ENCODE measurements at regions of chr11 and their contacts with region 1.

Region 1: DNA sequence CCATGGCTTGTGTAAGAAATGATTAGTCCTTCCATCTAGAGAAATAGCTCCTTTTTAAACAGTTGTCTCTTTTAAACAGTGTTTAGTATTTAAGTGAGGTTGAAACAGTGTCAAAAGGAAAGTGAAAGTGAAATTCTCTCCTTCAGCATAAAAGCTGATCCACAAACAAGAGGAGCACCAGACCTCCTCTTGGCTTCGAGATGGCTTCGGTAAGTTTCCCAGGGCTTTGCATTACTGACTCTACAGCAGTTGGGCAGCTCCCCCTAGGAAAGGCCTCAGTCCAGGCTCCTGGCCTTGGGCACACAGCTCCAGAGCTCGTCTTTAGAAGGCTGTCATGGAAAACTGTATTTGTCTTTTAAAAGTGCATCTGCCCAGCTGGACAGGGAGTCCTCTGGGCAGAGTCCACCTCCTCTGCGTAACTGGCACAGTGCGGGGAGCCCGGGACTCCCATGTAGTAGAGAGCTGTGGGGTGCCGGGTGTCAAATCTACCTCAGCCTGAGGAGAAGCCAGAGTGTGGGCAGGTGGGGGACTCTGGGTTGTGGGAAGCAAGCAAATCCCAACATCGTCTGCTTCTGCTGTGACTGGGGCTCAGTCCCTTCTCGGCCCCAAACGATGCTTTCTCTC is at the start of gene PLAAT4:
- DNase-seq: peak; percentile 64
- H3K4me3 Mint-ChIP-seq: peak within 1 kb of the TSS; percentile 82
- H3K27ac Mint-ChIP-seq: peak within 1 kb of the TSS; percentile 87
- H3K4me1 Mint-ChIP-seq: peaks cover 75% of the 10 kb centered on the region
- H3K27me3 Mint-ChIP-seq: no peaks in the 10 kb centered on the region

Region 2: DNA sequence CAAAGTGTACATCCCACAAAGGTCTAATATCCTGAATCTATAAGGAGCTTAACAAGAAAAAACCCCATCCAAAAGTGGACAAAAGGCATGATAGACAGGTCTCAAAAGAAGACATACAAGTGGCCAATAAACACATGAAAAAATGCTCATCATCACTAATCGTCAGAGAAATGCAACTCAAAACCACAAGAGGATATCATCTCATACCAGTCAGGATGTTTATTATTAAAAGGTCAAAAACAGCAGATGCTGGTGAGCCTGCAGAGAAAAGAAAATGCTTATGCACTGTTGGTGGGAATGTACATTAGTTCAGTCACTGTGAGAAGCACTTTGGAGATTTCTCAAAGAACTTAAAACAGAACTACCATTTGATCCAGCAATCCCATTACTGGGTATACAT is 18.2 kb before region 1 on chr11:
- CTCF ChIA-PET with region 1: no interaction called
- DNase-seq: no peak
- H3K4me3 Mint-ChIP-seq: no peak overlapping the region
- H3K27ac Mint-ChIP-seq: no peak overlapping the region
- H3K4me1 Mint-ChIP-seq: peaks cover 9% of the 10 kb centered on the region
- H3K27me3 Mint-ChIP-seq: peaks cover 5% of the 10 kb centered on the region

Region 3: DNA sequence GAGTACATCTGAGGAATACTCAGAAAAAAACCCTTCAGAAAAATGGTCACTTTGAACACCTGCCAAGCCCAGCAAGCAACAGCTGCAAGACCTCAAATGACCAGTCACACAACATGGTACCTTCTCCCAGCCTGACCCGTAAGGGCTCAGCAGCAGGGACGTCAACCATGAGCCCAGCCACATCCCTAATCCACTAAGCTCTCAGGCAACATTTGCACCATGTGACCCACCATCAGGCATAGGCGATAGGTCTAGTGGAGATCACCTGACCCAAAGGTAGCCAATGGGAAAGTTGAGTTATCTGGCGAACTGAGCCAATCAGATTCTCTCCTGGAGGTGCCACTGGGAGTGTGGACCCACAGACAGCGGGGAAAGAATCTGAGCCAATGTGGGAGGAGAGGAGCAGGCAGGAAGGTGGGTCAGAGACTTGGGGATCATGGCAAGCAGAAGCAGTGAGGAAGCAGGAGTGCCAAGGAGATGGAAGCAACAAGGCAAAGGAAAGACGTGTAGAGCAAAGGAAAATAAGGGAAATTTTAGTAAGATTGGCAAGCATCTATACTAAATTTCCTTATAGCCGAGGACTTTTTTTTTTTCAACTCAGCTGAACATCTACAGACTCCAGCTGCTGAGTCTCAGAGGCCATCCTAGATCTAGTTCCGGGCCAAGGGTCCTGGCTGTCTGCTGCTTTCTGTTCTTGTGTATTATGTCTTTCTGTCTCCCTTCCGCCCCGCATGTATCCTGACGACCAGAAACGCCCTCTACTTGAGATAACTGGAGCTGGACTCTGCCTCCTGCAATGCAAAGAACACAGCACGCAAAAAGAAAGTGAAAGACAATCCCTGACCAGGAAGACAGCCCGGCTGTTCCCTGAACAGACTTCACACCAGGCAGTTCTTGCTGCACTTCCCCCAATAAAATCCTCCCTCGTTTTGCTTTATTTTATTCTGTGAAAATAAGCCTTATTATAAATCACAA is 37.4 kb after region 1 on chr11:
- CTCF ChIA-PET with region 1: interaction called, 10 read pairs
- DNase-seq: peak; percentile 72
- H3K4me3 Mint-ChIP-seq: peak overlapping the region; percentile 50
- H3K27ac Mint-ChIP-seq: peak overlapping the region; percentile 82
- H3K4me1 Mint-ChIP-seq: peaks cover 24% of the 10 kb centered on the region
- H3K27me3 Mint-ChIP-seq: peaks cover 14% of the 10 kb centered on the region

Region 4: GRCh38 chr11:63635762-63636465 is 99.1 kb after region 1 on chr11:
- CTCF ChIA-PET with region 1: interaction called, 15 read pairs
- DNase-seq: peak; percentile 77
- H3K4me3 Mint-ChIP-seq: no peak overlapping the region
- H3K27ac Mint-ChIP-seq: no peak overlapping the region
- H3K4me1 Mint-ChIP-seq: peaks cover 15% of the 10 kb centered on the region
- H3K27me3 Mint-ChIP-seq: no peaks in the 10 kb centered on the region